Heart right ventricle (tissue), 16 donors: ENCODE measurements at regions of chr19 and their contacts with region 1.

Region 1: GRCh38 chr19:49676690-49677231 is 310 bp upstream of the PRMT1 start:
- DNase-seq: peak; percentile 99 to 100
- ATAC-seq: peak; percentile 85 to 93 (median 90)
- H3K4me3 ChIP-seq: peak overlapping the region; percentile 89 to 100 (median 98)
- H3K27ac ChIP-seq: peak overlapping the region; percentile 92 to 99 (median 97)
- H3K4me1 ChIP-seq: peaks cover 17 to 59% (median 50%) of the 10 kb centered on the region in 9 donors
- H3K27me3 ChIP-seq: no peaks in the 10 kb centered on the region
- CTCF ChIP-seq: no peak

Region 2: DNA sequence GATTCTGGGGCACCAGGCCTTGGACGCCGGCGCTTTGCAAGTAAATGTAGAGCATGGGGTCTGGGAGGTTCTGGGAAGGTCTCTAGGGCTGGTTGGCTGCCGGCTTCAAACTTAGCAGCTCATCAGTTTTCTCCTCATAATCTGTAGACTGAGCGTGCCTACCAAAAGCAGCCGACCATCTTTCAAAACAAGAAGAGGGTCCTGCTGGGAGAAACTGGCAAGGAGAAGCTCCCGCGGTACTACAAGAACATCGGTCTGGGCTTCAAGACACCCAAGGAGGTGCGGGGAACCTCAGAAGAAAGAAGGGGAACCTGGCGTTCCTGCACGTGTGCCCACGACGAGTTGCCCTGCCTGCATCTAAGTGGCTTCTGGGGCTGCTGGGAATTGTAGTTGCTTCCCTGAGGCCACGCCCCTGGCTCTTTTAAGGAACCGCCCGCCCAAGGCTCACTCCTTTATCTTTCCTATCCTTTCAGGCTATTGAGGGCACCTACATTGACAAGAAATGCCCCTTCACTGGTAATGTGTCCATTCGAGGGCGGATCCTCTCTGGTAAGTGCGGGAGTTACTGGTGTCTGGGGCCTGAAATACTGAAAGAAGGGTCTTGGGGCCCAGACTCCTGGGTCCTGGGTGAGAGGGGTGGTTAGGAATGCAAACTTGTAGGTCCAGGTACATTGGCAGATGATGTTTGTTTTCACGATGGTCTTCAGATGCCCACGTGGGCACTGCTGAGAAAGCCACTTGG is 179.5 kb before region 1 on chr19:
- intact Hi-C with region 1: loop called in 1 of 10 experiments (anchors 5 kb)
- DNase-seq: peak; percentile 32 to 56
- ATAC-seq: no peak
- H3K4me3 ChIP-seq: peak overlapping the region; percentile 63 to 97 (median 82)
- H3K27ac ChIP-seq: peak overlapping the region; percentile 87 to 99 (median 92)
- H3K4me1 ChIP-seq: peaks cover 11 to 61% (median 49%) of the 10 kb centered on the region in 9 donors
- H3K27me3 ChIP-seq: no peaks in the 10 kb centered on the region
- CTCF ChIP-seq: no peak

Region 3: DNA sequence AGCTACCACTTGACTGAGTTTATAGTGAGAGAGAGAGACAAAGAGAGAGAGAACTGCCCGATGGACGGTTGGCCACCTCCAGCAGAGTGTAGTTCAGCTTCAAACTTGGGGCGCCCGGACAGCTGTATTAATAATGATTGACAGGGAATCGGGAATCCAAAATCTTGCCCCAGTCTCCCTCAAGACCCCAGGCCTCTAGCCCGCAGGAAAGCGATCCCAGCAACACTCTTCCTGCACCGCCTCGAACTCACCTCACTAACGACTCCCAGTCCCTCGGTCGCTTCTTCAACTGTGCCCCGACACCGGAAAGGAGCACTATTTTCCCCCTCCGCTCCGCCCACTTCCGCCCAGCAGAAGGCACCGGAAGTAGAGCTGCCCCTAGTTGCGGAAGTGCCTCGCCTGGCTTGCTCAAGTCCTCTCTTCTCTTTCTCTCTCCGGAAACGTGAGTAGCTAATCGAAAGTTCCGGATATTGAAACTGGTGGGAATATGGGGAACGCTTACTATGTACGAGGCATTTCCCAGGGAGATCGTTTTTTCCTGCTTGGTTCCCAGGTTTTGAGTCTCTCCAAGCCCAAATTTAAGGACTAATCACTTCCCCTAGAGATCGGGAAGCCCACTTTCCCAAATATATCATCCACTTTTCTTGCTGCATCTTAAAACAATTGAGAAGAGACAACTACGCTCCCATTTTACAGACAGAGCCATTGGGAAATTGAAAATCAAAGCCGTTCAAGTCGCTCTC is 96.3 kb before region 1 on chr19 and contains the start of gene NOSIP:
- intact Hi-C with region 1: loop called in 3 of 10 experiments (anchors 5 to 10 kb)
- DNase-seq: peak; percentile 93 to 97
- ATAC-seq: peak; percentile 94 to 98 (median 98)
- H3K4me3 ChIP-seq: peak within 1 kb of the TSS; percentile 46 to 79 (median 68)
- H3K27ac ChIP-seq: peak within 1 kb of the TSS; percentile 28 to 89 (median 84)
- H3K4me1 ChIP-seq: peaks cover 5 to 31% (median 29%) of the 10 kb centered on the region in 9 donors
- H3K27me3 ChIP-seq: no peaks in the 10 kb centered on the region
- CTCF ChIP-seq: no peak
- total RNA-seq, gene NOSIP: 38.0 to 53.9 (median 45.1) TPM

Region 4: GRCh38 chr19:49640113-49640898 is 36.5 kb before region 1 on chr19 and contains the start of gene RRAS:
- intact Hi-C with region 1: loop called in 4 of 10 experiments (anchors 1 to 2 kb)
- DNase-seq: peak; percentile 98 to 100
- ATAC-seq: peak; percentile 68 to 84 (median 78)
- H3K4me3 ChIP-seq: peak within 1 kb of the TSS; percentile 47 to 95 (median 88)
- H3K27ac ChIP-seq: peak within 1 kb of the TSS; percentile 96 to 100 (median 99)
- H3K4me1 ChIP-seq: peaks cover 2 to 75% (median 62%) of the 10 kb centered on the region in 9 donors
- H3K27me3 ChIP-seq: no peaks in the 10 kb centered on the region
- CTCF ChIP-seq: no peak
- total RNA-seq, gene RRAS: 90.4 to 141 (median 113) TPM

Region 5: DNA sequence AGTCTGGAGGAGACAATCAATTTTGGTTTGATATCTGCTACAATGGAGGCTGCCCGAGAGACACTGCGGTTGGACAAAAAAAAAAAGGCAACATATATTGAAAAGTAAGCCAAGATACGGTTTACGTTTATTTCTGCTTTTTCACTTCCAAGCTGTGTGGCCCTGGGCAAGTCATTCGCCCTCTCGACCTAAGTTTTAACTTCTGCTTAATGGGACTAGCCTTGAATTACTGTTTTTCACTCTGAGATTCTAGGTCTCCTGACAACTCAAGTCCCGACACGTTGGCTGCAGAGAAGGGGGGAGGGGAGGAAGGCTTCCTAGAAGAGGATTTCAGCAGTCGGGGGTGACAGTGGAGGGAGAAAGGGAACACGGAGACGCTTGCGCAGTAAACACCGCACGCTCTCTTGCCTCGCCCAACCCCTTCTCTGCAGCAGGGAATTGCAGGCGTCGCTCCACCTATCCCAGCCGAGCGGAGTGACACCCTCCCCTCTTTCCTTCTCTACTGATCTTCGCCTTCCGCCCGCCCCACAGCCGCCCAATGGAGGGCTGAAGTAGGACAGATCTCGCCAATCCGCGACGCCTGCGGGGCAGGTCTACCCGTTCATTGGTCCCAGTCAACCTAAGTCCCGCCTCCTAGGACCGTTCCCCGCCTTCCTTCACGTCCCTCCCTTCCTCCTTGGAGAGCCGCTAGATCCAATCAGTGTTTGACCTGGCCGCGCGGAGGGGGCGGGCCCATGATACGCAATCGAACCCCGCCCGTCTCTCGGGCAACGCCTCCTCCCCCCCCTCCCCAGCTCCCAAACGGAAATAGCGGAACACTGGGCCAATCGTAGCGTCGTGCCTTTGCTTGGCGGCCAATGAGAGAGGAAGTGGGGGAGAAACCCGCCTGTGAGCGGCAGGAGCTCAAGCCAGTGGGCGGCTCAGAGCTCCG is 89.5 kb after region 1 on chr19:
- intact Hi-C with region 1: loop called in 1 of 10 experiments (anchors 5 kb)
- DNase-seq: peak; percentile 98 to 100
- ATAC-seq: peak; percentile 90 to 96 (median 94)
- H3K4me3 ChIP-seq: peak overlapping the region; percentile 4 to 96 (median 82)
- H3K27ac ChIP-seq: peak overlapping the region; percentile 81 to 97 (median 92)
- H3K4me1 ChIP-seq: peaks cover 4 to 49% (median 33%) of the 10 kb centered on the region in 9 donors
- H3K27me3 ChIP-seq: no peaks in the 10 kb centered on the region
- CTCF ChIP-seq: no peak

Region 6: DNA sequence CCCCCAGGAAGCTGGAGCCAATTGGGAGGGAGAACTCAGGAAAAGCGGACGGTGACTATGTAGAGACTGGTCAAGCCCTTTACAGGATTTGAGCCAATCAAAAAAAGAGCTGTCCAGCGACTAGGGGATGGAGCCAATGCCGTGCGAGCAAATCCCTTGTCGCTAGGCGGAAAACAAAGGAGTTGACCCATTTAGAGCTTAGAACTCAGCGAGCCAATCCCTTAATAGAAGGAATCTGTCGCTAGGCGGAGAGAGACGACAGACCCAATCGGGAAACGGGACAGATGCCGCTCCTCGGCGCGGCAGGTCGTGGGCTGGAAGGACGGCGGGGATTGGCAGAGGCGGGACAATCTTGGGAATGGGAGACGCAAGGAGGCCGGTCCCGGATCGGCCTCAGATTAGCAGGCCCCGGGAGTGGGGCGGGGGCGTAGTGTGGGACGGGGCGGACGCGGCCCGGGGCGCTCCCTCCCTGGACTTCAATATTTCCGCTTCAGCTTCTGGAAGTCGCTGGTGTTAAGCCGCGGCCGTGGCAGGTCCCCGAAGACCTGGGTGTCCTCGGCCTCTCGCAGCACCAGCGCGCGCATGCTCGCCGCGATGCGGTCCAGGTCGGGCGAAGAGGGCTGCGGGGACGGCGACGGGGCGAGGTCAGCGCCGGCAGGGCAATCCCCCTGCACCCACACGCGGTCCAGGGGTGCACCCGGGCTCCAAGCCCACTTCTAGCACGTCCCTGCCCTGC is 192.8 kb after region 1 on chr19:
- intact Hi-C with region 1: loop called in 1 of 10 experiments (anchors 5 kb)
- DNase-seq: peak; percentile 96 to 98
- ATAC-seq: peak; percentile 77 to 91 (median 84)
- H3K4me3 ChIP-seq: peak overlapping the region; percentile 41 to 73 (median 60)
- H3K27ac ChIP-seq: peak overlapping the region; percentile 88 to 98 (median 94)
- H3K4me1 ChIP-seq: peaks cover 20 to 60% (median 49%) of the 10 kb centered on the region in 9 donors
- H3K27me3 ChIP-seq: no peaks in the 10 kb centered on the region
- CTCF ChIP-seq: peak in 3 of 9 donors; percentile 14 to 24 (median 16)

Region 7: DNA sequence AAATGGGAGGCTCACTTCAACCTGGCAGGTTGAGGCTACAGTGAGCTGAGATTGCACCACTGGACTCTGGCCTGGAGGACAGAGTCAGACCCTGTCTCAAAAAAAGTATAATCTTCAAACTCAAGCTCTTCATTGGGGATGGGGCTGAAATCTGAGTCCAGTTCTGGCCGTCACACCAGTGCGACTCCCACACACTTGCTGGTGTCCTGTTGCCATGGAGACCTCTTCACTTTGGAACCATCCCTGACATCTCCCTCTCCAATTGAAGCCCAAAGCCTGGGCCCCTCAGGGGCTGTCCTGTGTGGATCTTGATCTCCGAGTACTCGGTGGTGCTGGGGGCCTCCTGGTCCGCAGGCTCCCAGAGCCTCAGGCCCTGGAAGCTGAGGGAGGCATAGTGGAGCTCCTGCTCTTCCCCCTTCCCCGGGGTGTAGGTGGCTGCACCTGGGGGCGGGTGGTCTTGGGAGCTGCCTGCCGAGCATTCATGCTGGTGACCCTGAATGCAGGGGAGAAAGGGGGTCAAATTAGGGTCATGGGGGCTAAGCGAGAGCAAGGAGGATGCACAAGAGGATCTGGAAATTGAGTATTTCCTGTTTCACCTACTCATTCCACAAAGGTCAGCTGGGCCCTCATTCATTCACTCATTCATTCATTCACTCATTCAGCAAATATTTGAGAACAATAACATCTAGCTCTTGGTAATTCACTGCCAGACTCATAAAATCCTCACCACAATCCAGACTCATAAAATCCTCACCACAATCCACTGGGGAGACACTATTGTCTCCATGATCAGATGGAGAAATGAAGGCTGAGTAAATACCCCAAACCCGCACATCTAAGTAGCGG is 273.2 kb after region 1 on chr19:
- intact Hi-C with region 1: no loop called
- DNase-seq: no peak
- ATAC-seq: no peak
- H3K4me3 ChIP-seq: no peak overlapping the region
- H3K27ac ChIP-seq: no peak overlapping the region
- H3K4me1 ChIP-seq: peaks cover 0 to 29% (median 14%) of the 10 kb centered on the region in 9 donors
- H3K27me3 ChIP-seq: peaks cover 0 to 14% (median 4%) of the 10 kb centered on the region in 7 donors
- CTCF ChIP-seq: no peak